ENCODE measurements at regions of chr9 and their contacts with region 1.

Region 1: DNA sequence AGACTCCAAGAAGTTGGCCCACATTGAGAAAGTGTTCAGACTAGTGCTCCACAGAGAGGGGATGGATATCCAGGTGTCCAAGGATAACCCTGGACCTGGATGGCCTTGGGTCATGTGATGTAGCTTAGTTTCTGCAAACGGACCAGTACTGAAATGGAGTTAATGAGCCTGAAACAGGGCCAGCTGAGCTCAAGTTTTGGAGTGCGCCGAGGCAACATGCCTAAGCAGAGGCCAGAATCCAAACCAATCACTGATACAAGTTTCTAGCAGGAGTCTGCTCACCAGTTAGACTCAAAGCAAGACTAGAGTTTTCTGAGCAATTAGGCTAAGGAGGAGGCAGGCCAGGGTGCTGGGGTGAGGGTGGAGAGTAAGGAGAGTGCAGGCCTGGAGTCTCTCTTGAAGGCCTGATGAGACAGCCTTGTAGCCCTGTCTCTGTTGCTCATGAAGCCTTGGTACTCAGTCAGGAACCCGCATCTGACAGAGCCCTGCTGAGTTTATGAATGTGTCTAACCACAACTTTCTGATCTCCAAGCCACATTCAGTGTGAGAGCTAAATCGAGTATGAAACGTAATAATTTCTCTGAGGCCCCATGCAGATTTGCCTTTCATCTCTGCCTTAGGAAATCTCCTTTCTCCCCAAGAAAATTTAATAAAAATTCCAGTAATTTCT is 68.9 kb upstream of the EQTN start:
- DNase-seq: peak; percentile 85
- H3K4me3 Mint-ChIP-seq: no peak overlapping the region
- H3K27ac Mint-ChIP-seq: peak overlapping the region; percentile 87
- H3K4me1 Mint-ChIP-seq: peaks cover 40% of the 10 kb centered on the region
- H3K27me3 Mint-ChIP-seq: peaks cover 6% of the 10 kb centered on the region

Region 2: GRCh38 chr9:26946753-26947727 is 418.8 kb before region 1 on chr9 and contains the start of gene PLAA:
- CTCF ChIA-PET with region 1: no interaction called
- intact Hi-C with region 1: loop called (anchors 2 kb)
- DNase-seq: peak; percentile 90
- H3K4me3 Mint-ChIP-seq: peak within 1 kb of the TSS; percentile 89
- H3K27ac Mint-ChIP-seq: peak within 1 kb of the TSS; percentile 97
- H3K4me1 Mint-ChIP-seq: peaks cover 42% of the 10 kb centered on the region
- H3K27me3 Mint-ChIP-seq: no peaks in the 10 kb centered on the region
- total RNA-seq, gene PLAA: 29.9 to 30.6 TPM

Region 3: DNA sequence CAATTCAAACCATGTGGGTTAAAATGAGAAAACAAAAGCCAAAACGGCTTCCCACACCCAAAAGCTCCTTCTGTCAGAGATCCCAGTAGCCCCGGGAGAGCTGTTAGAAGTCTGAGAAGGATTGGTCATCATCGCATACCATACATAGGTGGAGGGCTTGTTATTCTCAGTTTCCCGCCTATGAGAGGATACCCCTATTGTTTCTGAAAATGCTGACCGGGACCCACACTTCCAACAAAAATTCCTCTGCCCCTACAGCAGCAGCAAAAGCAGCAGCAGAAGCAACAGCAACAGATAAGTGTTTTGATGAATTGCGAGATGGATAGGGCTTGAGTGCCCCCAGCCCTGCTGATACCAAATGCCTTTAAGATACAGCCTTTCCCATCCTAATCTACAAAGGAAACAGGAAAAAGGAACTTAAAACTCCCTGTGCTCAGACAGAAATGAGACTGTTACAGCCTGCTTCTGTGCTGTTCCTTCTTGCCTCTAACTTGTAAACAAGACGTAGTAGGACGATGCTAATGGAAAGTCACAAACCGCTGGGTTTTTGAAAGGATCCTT is 256.8 kb before region 1 on chr9 and contains the start of gene TEK:
- CTCF ChIA-PET with region 1: no interaction called
- intact Hi-C with region 1: no loop called
- DNase-seq: no peak
- H3K4me3 Mint-ChIP-seq: no peak within 1 kb of the TSS
- H3K27ac Mint-ChIP-seq: no peak within 1 kb of the TSS
- H3K4me1 Mint-ChIP-seq: no peaks in the 10 kb centered on the region
- H3K27me3 Mint-ChIP-seq: peaks cover 5% of the 10 kb centered on the region
- total RNA-seq, gene TEK: not detected

Region 4: DNA sequence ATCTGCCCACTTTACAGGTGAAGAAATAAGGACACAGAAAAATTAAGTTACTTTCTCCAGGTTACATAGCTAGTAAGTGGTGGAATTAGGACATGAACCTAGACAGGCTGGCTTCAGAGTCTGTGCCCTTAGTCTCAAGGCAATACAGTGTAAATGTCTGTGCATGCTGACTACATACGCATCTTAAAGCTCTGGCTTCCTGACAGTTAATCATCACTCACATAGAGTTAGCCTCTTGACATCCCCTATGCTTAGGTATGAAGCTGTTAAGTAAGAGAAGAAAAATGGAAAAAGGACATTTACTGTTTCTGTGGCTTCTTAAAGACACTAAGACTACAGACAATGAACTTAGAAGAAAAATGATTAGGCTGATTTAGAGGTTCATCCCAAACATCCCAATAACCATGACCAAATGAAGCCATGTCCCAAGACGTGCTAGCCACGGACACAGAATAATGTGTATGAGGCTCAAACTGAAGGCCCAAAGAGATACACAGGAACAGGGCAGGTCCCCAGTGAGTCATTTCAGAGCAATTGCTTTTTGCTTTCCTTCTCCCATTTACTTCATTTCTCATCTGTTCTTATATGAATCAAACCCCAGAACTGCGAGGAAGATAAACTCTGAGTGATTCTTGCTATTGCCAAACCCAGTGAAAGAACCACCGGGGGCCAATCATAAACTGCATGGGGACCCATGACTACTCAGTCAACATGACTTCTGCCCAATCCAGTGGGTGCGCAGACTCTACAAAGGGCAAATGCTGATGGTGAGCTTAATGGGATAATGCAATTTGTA is 58.3 kb after region 1 on chr9:
- CTCF ChIA-PET with region 1: no interaction called
- intact Hi-C with region 1: loop called (anchors 1 kb)
- DNase-seq: peak; percentile 51
- H3K4me3 Mint-ChIP-seq: no peak overlapping the region
- H3K27ac Mint-ChIP-seq: peak overlapping the region; percentile 11
- H3K4me1 Mint-ChIP-seq: peaks cover 8% of the 10 kb centered on the region
- H3K27me3 Mint-ChIP-seq: no peaks in the 10 kb centered on the region

Region 5: GRCh38 chr9:27499481-27499880 is 133.6 kb after region 1 on chr9:
- CTCF ChIA-PET with region 1: no interaction called
- intact Hi-C with region 1: loop called (anchors 1 kb)
- DNase-seq: no peak
- H3K4me3 Mint-ChIP-seq: no peak overlapping the region
- H3K27ac Mint-ChIP-seq: peak overlapping the region; percentile 59
- H3K4me1 Mint-ChIP-seq: peaks cover 41% of the 10 kb centered on the region
- H3K27me3 Mint-ChIP-seq: peaks cover 1% of the 10 kb centered on the region

Region 6: GRCh38 chr9:27529316-27530278 is 163.8 kb after region 1 on chr9 and contains the start of gene MOB3B:
- CTCF ChIA-PET with region 1: interaction called, 23 read pairs
- intact Hi-C with region 1: loop called (anchors 1 kb)
- DNase-seq: peak; percentile 80
- H3K4me3 Mint-ChIP-seq: peak within 1 kb of the TSS; percentile 86
- H3K27ac Mint-ChIP-seq: peak within 1 kb of the TSS; percentile 86
- H3K4me1 Mint-ChIP-seq: peaks cover 10% of the 10 kb centered on the region
- H3K27me3 Mint-ChIP-seq: peaks cover 8% of the 10 kb centered on the region
- total RNA-seq, gene MOB3B: 3.0 to 3.2 TPM

Region 7: GRCh38 chr9:27785714-27786100 is 419.9 kb after region 1 on chr9:
- CTCF ChIA-PET with region 1: no interaction called
- intact Hi-C with region 1: loop called (anchors 10 kb)
- DNase-seq: no peak
- H3K4me3 Mint-ChIP-seq: no peak overlapping the region
- H3K27ac Mint-ChIP-seq: no peak overlapping the region
- H3K4me1 Mint-ChIP-seq: peaks cover 9% of the 10 kb centered on the region
- H3K27me3 Mint-ChIP-seq: peaks cover 17% of the 10 kb centered on the region

Measured in activated naive CD4-positive, alpha-beta T cell treated with anti-CD3 and anti-CD28 coated beads for 36 hours (primary cell).